Activated CD4-positive, alpha-beta T cell treated with anti-CD3 and anti-CD28 coated beads, Interleukin-2, amount 10 ng/mL, durations not matched to agents 24 days and 14 days (primary cell): ENCODE measurements at regions of chr17 and their contacts with region 1.

Region 1: GRCh38 chr17:17496189-17497064 is at the start of gene RASD1:
- DNase-seq: peak; percentile 95
- H3K4me3 Mint-ChIP-seq: peak within 1 kb of the TSS; percentile 77
- H3K27ac Mint-ChIP-seq: peak within 1 kb of the TSS; percentile 72
- H3K4me1 Mint-ChIP-seq: peaks cover 11% of the 10 kb centered on the region
- H3K27me3 Mint-ChIP-seq: peaks cover 21% of the 10 kb centered on the region
- total RNA-seq, gene RASD1: 6.6 and 7.5 TPM in 2 replicates

Region 2: GRCh38 chr17:17303010-17303846 is 193.2 kb before region 1 on chr17 and contains the start of gene NT5M:
- intact Hi-C with region 1: loop called (anchors 2 kb)
- DNase-seq: peak; percentile 94
- H3K4me3 Mint-ChIP-seq: peak within 1 kb of the TSS; percentile 89
- H3K27ac Mint-ChIP-seq: peak within 1 kb of the TSS; percentile 92
- H3K4me1 Mint-ChIP-seq: peaks cover 30% of the 10 kb centered on the region
- H3K27me3 Mint-ChIP-seq: no peaks in the 10 kb centered on the region
- total RNA-seq, gene NT5M: 7.1 and 8.1 TPM in 2 replicates

Region 3: DNA sequence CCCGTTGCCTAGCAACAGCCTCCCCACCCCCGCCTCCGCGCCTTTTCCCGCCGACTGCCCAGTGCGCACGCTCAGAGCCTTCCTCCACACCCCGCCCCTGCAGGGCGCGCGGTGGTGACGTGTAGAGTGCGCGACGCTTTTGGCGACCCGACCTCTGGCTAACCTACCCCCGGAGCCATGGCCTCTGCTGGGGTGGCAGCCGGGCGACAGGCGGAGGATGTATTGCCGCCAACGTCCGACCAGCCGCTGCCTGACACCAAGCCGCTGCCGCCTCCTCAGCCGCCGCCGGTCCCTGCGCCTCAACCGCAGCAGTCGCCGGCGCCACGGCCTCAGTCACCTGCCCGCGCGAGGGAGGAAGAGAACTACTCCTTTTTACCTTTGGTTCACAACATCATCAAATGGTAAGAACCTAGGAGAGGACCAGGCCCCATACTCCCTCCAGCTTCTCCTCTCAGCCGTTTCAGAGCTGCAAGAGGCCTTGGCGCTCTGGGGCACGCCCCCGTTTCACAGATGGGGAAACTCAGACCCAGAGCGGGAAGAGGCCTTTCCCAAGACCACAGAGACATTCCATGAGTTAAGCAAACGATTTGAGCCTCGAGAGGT is 19.5 kb before region 1 on chr17 and contains the start of gene MED9:
- intact Hi-C with region 1: loop called (anchors 1 kb)
- DNase-seq: peak; percentile 99
- H3K4me3 Mint-ChIP-seq: peak within 1 kb of the TSS; percentile 96
- H3K27ac Mint-ChIP-seq: peak within 1 kb of the TSS; percentile 93
- H3K4me1 Mint-ChIP-seq: peaks cover 35% of the 10 kb centered on the region
- H3K27me3 Mint-ChIP-seq: peaks cover 13% of the 10 kb centered on the region
- total RNA-seq, gene MED9: 14.4 and 15.3 TPM in 2 replicates

Region 4: GRCh38 chr17:17591355-17592298 is 95.2 kb after region 1 on chr17 and contains the start of gene PEMT:
- intact Hi-C with region 1: loop called (anchors 5 kb)
- DNase-seq: peak; percentile 98
- H3K4me3 Mint-ChIP-seq: peak within 1 kb of the TSS; percentile 92
- H3K27ac Mint-ChIP-seq: peak within 1 kb of the TSS; percentile 96
- H3K4me1 Mint-ChIP-seq: peaks cover 18% of the 10 kb centered on the region
- H3K27me3 Mint-ChIP-seq: no peaks in the 10 kb centered on the region
- total RNA-seq, gene PEMT: 43.6 and 45.5 TPM in 2 replicates

Region 5: DNA sequence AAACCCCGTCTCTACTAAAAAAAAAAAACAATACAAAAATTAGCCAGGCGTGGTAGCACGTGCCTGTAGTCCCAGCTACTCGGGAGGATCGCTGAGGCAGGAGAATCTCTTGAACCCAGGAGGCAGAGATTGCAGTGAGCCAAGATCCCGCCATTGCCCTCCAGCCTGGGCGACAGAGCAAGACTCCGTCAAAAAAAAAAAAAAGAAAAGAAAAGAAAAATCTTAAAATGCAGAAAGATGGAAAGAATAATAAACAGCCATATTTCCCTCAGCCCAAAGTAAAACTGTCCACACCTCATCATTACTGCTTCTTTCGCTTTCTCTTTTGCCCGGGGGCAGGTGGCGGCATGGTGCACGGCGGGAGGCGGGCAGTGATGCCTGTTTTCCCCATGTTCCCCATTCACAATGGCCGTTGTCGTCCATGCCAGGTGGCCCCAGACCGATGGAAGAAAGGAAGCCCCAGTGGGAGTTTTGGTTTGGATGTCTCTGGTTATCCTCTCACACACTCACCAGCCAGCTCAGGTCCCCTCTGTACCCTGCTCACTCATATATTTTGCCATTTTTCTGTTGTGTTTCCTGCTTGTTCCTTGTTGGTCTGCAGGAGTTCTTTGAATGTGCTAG is 132.1 kb after region 1 on chr17:
- intact Hi-C with region 1: loop called (anchors 5 kb)
- DNase-seq: peak; percentile 86
- H3K4me3 Mint-ChIP-seq: peak overlapping the region; percentile 86
- H3K27ac Mint-ChIP-seq: peak overlapping the region; percentile 94
- H3K4me1 Mint-ChIP-seq: peaks cover 8% of the 10 kb centered on the region
- H3K27me3 Mint-ChIP-seq: no peaks in the 10 kb centered on the region

Region 6: GRCh38 chr17:17959520-17960361 is 463.3 kb after region 1 on chr17:
- intact Hi-C with region 1: no loop called
- DNase-seq: peak; percentile 78
- H3K4me3 Mint-ChIP-seq: peak overlapping the region; percentile 84
- H3K27ac Mint-ChIP-seq: peak overlapping the region; percentile 99
- H3K4me1 Mint-ChIP-seq: peaks cover 52% of the 10 kb centered on the region
- H3K27me3 Mint-ChIP-seq: no peaks in the 10 kb centered on the region

Region 7: GRCh38 chr17:18038861-18039534 is 542.6 kb after region 1 on chr17 and contains the starts of genes ATPAF2 and GID4:
- intact Hi-C with region 1: loop called (anchors 10 kb)
- DNase-seq: peak; percentile 100
- H3K4me3 Mint-ChIP-seq: peak within 1 kb of the TSS; percentile 93
- H3K27ac Mint-ChIP-seq: peak within 1 kb of the TSS; percentile 92
- H3K4me1 Mint-ChIP-seq: peaks cover 39% of the 10 kb centered on the region
- H3K27me3 Mint-ChIP-seq: no peaks in the 10 kb centered on the region
- total RNA-seq, gene ATPAF2: 31.9 and 33.1 TPM in 2 replicates
- total RNA-seq, gene GID4: 9.6 and 11.3 TPM in 2 replicates